ENCODE measurements at regions of chr1 and their contacts with region 1.

Region 1: DNA sequence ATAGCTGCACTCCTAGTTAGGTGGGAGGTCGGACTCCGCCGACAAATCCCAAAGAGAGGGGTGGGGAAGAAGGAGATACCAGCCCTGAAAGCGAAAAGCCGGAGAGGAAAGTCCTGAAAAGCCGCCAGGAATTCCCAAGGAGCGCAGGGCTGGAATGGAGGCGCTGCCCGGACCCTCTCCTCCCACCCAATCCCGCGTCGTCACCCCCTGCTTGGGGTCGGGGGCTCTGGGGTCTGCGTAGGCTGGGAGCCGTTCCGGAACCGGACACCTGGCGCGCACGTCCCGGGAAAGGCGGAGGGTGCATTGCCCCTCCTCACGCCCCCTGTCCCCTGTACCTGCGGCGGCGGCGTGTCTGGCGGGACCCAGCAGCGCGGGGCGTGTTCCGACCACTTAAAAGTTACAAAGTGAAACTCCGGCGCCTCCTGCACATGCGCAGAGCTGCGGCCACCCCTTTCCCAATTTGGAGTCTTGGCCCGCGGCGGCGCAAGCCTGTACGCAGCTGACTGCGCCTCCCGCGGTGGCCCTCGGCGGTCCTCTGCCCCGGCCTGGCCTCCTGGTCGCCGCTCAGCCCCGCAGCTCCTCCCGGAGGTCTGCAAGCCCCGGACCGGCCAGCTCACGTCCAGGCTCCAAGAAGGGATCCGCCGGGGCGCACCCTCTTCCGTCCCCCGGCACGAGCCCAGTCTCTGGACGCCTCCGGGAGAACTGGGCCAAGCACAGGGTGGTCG is at the start of gene TMEM63A:
- DNase-seq: peak; percentile 94 to 98
- ATAC-seq: peak; percentile 88 to 93 (median 90)
- H3K4me3 ChIP-seq: peak within 1 kb of the TSS; percentile 100
- H3K27ac ChIP-seq: peak within 1 kb of the TSS; percentile 92
- H3K4me1 ChIP-seq: peaks cover 41% of the 10 kb centered on the region
- H3K27me3 ChIP-seq: peaks cover 0 to 1% (median 0%) of the 10 kb centered on the region in 3 donors
- CTCF ChIP-seq: peak; percentile 39
- total RNA-seq, gene TMEM63A: 12.7 to 17.9 (median 16.0) TPM

Region 2: GRCh38 chr1:225554216-225554812 is 327.8 kb before region 1 on chr1:
- intact Hi-C with region 1: no loop called
- DNase-seq: no peak
- ATAC-seq: peak in 2 of 4 donors; percentile 55 to 67
- H3K4me3 ChIP-seq: no peak overlapping the region
- H3K27ac ChIP-seq: no peak overlapping the region
- H3K4me1 ChIP-seq: peaks cover 11% of the 10 kb centered on the region
- H3K27me3 ChIP-seq: no peaks in the 10 kb centered on the region
- CTCF ChIP-seq: peak; percentile 62

Region 3: GRCh38 chr1:225754940-225755641 is 127.0 kb before region 1 on chr1:
- intact Hi-C with region 1: no loop called
- DNase-seq: no peak
- ATAC-seq: peak; percentile 80 to 88 (median 81)
- H3K4me3 ChIP-seq: no peak overlapping the region
- H3K27ac ChIP-seq: peak overlapping the region; percentile 65
- H3K4me1 ChIP-seq: peaks cover 15% of the 10 kb centered on the region
- H3K27me3 ChIP-seq: no peaks in the 10 kb centered on the region
- CTCF ChIP-seq: no peak

Region 4: DNA sequence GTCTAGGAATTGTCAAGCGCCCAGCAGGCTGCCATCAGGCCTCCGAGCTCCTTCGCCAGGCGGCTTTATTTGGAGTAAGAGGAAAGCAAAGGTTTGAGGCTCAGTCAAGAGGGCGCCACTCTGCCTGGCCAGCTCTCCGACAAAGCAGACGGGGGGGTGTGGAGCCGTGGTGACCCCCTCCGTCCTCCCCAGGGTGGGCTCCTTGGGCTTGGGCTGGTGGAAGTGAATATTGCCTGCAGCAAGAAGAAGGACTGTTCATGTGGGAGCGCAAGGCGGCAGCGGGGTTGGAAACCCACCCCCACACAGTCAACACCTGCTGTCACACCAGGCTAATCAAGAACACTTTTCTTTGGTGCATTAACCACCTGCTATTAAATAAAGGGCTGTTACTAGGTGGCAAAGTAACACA is 57.6 kb before region 1 on chr1:
- intact Hi-C with region 1: loop called in 1 of 2 experiments (anchors 5 kb)
- DNase-seq: peak in 1 of 2 donors; percentile 20
- ATAC-seq: no peak
- H3K4me3 ChIP-seq: no peak overlapping the region
- H3K27ac ChIP-seq: no peak overlapping the region
- H3K4me1 ChIP-seq: peaks cover 46% of the 10 kb centered on the region
- H3K27me3 ChIP-seq: no peaks in the 10 kb centered on the region
- CTCF ChIP-seq: no peak

Region 5: GRCh38 chr1:225911191-225912130 is 29.3 kb after region 1 on chr1:
- intact Hi-C with region 1: loop called in 1 of 2 experiments (anchors 5 kb)
- DNase-seq: peak; percentile 70 to 84
- ATAC-seq: peak; percentile 85 to 96 (median 88)
- H3K4me3 ChIP-seq: peak overlapping the region; percentile 31
- H3K27ac ChIP-seq: no peak overlapping the region
- H3K4me1 ChIP-seq: no peaks in the 10 kb centered on the region
- H3K27me3 ChIP-seq: no peaks in the 10 kb centered on the region
- CTCF ChIP-seq: peak; percentile 88

Region 6: DNA sequence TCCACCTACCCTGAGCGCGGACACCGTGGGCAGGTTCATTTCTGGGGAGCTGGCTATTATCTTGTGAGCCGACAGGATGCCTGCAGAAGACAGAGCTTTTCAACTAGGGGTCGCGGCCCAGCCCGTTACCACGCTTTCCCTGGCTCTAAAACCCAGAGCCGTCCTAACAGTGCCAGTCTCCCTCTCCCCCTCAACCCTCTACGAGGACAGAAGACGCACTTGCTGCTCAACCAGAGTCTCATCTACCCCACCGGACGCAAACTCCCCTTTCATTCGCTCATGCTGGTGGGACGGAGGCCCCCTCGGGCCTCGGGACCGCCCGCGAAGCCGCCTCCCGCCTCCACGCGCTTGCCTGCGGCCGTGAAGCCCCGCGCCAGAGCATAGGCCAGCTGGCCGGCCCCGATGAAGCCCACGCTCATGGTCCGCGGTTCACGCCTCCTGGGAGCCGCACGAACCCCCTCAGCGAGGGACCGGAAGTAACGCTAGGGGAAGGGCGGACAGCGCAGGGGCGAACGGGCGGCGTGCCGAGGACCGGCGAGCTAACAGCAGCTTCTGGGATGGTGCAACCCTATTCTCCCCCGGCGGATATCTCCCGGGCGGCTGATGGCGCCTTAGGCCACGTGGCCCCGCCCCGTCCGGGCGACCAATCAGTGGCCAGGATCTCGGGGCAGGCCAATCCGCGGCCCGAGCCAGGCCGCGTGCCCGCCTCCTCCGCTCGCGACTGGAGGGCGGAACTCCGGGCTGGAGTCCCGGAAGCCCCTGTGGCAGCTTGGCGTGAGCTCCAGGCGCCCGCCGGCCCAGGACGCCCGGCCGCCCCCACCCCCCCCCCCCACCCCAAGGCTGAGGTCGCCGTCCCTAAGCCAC is 41.8 kb after region 1 on chr1 and contains the start of gene PYCR2:
- intact Hi-C with region 1: loop called (anchors 5 kb)
- DNase-seq: peak; percentile 97 to 99
- ATAC-seq: peak; percentile 99 to 100 (median 99)
- H3K4me3 ChIP-seq: peak within 1 kb of the TSS; percentile 98
- H3K27ac ChIP-seq: peak within 1 kb of the TSS; percentile 97
- H3K4me1 ChIP-seq: peaks cover 14% of the 10 kb centered on the region
- H3K27me3 ChIP-seq: no peaks in the 10 kb centered on the region
- CTCF ChIP-seq: no peak
- total RNA-seq, gene PYCR2: 46.0 to 59.4 (median 53.7) TPM

Measured in psoas muscle (tissue), 8 donors.